ENCODE measurements at regions of chr1 and their contacts with region 1.

Region 1: GRCh38 chr1:158124999-158125398 is 55.7 kb upstream of the CD1D start:
- DNase-seq: peak; percentile 85
- H3K4me3 ChIP-seq: no peak overlapping the region
- H3K27ac ChIP-seq: no peak overlapping the region
- H3K4me1 ChIP-seq: no peaks in the 10 kb centered on the region
- H3K27me3 ChIP-seq: no peaks in the 10 kb centered on the region
- CTCF ChIP-seq: peak; percentile 75 to 95 (median 84)
- POLR2A ChIP-seq: no peak

Region 2: GRCh38 chr1:157963713-157964112 is 161.3 kb before region 1 on chr1:
- intact Hi-C with region 1: loop called (anchors 2 kb)
- DNase-seq: peak; percentile 35
- H3K4me3 ChIP-seq: no peak overlapping the region
- H3K27ac ChIP-seq: no peak overlapping the region
- H3K4me1 ChIP-seq: no peaks in the 10 kb centered on the region
- H3K27me3 ChIP-seq: no peaks in the 10 kb centered on the region
- CTCF ChIP-seq: peak; percentile 87 to 90 (median 88)
- POLR2A ChIP-seq: no peak

Region 3: GRCh38 chr1:158353303-158354075 is 228.5 kb after region 1 on chr1 and contains the start of gene CD1E:
- intact Hi-C with region 1: no loop called
- DNase-seq: no peak
- H3K4me3 ChIP-seq: no peak within 1 kb of the TSS
- H3K27ac ChIP-seq: no peak within 1 kb of the TSS
- H3K4me1 ChIP-seq: no peaks in the 10 kb centered on the region
- H3K27me3 ChIP-seq: no peaks in the 10 kb centered on the region
- CTCF ChIP-seq: no peak
- POLR2A ChIP-seq: no peak
- total RNA-seq, gene CD1E: 0.23 to 1.2 TPM

Region 4: GRCh38 chr1:159040206-159040605 is 915.2 kb after region 1 on chr1:
- intact Hi-C with region 1: no loop called
- DNase-seq: no peak
- H3K4me3 ChIP-seq: no peak overlapping the region
- H3K27ac ChIP-seq: no peak overlapping the region
- H3K4me1 ChIP-seq: no peaks in the 10 kb centered on the region
- H3K27me3 ChIP-seq: no peaks in the 10 kb centered on the region
- CTCF ChIP-seq: no peak
- POLR2A ChIP-seq: no peak

Measured in prostate gland (tissue), 2 donors.